HAP-1 (cell line): ENCODE measurements at regions of chr2 and their contacts with region 1.

Region 1: DNA sequence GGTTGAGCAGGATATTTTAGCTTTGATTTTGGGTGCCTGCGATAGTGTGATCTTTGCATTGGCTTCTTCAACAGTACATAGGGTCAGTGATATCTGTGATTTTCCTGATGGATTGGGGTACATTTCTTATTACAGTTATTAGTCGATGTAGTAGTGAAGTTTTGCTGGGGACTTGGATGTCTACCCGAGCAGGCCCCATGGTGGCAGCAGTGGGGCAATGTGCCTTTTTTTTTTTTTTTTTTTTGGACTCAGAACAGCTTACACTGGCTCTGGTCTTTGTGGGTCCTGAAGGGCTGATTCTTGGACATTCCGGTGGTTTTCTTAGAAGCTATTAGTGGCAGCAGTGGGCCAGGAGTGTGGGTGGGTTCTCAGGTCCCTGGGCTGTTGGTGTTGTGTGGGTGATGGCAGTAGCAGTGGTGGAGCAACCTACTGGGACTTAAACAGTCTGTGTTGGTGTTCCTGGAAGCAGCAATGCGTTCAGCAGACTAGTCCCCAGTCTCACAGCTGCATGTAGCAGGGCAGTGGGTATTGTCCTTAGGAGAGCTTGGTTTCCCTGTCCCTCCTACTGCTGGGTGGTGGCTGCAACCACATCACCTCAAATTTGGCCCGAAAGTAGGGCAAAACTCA is 53.7 kb upstream of the SLC4A10 start:
- DNase-seq: no peak
- H3K4me3 ChIP-seq: no peak overlapping the region
- H3K4me1 ChIP-seq: no peaks in the 10 kb centered on the region
- H3K27me3 ChIP-seq: no peaks in the 10 kb centered on the region; the same call in 1 of the 2 replicates

Region 2: DNA sequence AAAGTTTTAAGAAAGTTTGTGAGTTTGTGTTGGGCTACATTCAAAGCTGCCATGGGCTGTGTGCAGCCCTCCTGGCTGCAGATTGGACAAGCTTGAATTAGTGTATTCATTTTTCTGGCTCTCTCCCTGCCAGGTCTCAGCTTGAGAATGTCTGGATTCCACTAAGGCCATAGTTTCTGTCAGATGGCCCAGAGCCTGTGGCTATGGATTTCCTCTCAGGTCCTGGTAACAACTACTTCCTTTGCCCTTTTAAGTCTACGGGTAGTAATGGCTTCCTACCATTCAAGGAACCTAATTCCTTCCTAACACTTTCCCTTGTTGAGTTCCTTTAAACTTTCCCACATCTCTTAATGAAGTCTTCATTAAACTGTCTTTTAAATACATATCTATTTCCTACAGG is 286.6 kb before region 1 on chr2:
- in situ Hi-C with region 1: loop called (anchors 25 kb)
- DNase-seq: no peak
- H3K4me3 ChIP-seq: no peak overlapping the region
- H3K4me1 ChIP-seq: no peaks in the 10 kb centered on the region
- H3K27me3 ChIP-seq: no peaks in the 10 kb centered on the region